Testis (tissue), 5 donors: ENCODE measurements at regions of chr3 and their contacts with region 1.

Region 1: GRCh38 chr3:32374788-32375595 is 16.7 kb upstream of the CMTM7 start:
- DNase-seq: peak; percentile 86
- H3K4me3 ChIP-seq: no peak overlapping the region
- H3K27ac ChIP-seq: no peak overlapping the region
- H3K4me1 ChIP-seq: no peaks in the 10 kb centered on the region
- H3K27me3 ChIP-seq: no peaks in the 10 kb centered on the region
- CTCF ChIP-seq: peak; percentile 63 to 78 (median 66)
- POLR2A ChIP-seq: no peak

Region 2: DNA sequence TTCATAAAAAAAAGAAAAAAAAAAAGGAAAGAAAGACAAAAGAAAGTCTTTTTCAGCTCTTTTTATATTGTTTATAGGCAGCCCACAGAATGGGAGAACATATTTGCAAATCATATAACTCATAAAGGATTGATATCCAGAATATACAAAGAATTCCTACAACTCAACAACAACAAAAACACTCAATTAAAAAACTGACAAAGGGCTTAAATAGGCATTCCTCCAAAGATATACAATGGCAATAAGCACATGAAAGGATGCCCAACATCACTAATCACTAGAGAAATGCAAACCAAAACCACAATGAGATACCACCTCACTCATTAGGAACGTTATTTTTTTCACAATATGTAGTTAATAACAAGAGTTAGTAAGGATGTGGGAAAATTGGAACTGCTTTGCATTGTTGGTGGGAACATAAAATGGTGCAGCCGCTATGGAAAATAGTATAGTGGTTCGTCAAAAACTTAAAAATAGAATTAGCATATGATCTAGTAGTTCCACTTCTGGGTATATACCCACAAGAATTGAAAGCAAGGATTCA is 190.7 kb before region 1 on chr3:
- intact Hi-C with region 1: no loop called
- DNase-seq: no peak
- H3K4me3 ChIP-seq: no peak overlapping the region
- H3K27ac ChIP-seq: no peak overlapping the region
- H3K4me1 ChIP-seq: no peaks in the 10 kb centered on the region
- H3K27me3 ChIP-seq: no peaks in the 10 kb centered on the region
- CTCF ChIP-seq: no peak
- POLR2A ChIP-seq: no peak

Region 3: GRCh38 chr3:32467333-32468070 is 92.5 kb after region 1 on chr3:
- intact Hi-C with region 1: loop called (anchors 10 kb)
- DNase-seq: peak; percentile 73
- H3K4me3 ChIP-seq: peak overlapping the region in 1 of 2 donors; percentile 5
- H3K27ac ChIP-seq: no peak overlapping the region
- H3K4me1 ChIP-seq: peaks cover 10% of the 10 kb centered on the region
- H3K27me3 ChIP-seq: no peaks in the 10 kb centered on the region
- CTCF ChIP-seq: peak; percentile 94 to 98 (median 94)
- POLR2A ChIP-seq: no peak